Head of caudate nucleus (tissue), 42 donors: ENCODE measurements at regions of chr9 and their contacts with region 1.

Region 1: GRCh38 chr9:5437254-5438216 is at the start of gene PLGRKT:
- DNase-seq: peak; percentile 93 to 99 (median 97)

Region 2: GRCh38 chr9:4762108-4762885 is 675.2 kb before region 1 on chr9:
- intact Hi-C with region 1: loop called (anchors 10 kb)
- DNase-seq: peak; percentile 41 to 92 (median 78)

Region 3: GRCh38 chr9:5186416-5187169 is 250.9 kb before region 1 on chr9:
- intact Hi-C with region 1: loop called (anchors 5 kb)
- DNase-seq: peak in 40 of 42 donors; percentile 8 to 73 (median 40)

Region 4: GRCh38 chr9:5352637-5353455 is 84.7 kb before region 1 on chr9:
- intact Hi-C with region 1: loop called (anchors 10 kb)
- DNase-seq: no peak